ENCODE measurements at regions of chr12 and their contacts with region 1.

Region 1: GRCh38 chr12:118979763-118980406 is 1.5 kb upstream of the SRRM4 start:
- DNase-seq: peak; percentile 22 to 58 (median 37)
- ATAC-seq: peak in 3 of 4 donors; percentile 80 to 82 (median 82)
- H3K4me3 ChIP-seq: no peak overlapping the region
- H3K27ac ChIP-seq: no peak overlapping the region
- H3K4me1 ChIP-seq: no peaks in the 10 kb centered on the region
- H3K27me3 ChIP-seq: peaks cover 0 to 20% (median 7%) of the 10 kb centered on the region in 4 donors
- CTCF ChIP-seq: peak in 3 of 4 donors; percentile 48 to 62 (median 57)

Region 2: DNA sequence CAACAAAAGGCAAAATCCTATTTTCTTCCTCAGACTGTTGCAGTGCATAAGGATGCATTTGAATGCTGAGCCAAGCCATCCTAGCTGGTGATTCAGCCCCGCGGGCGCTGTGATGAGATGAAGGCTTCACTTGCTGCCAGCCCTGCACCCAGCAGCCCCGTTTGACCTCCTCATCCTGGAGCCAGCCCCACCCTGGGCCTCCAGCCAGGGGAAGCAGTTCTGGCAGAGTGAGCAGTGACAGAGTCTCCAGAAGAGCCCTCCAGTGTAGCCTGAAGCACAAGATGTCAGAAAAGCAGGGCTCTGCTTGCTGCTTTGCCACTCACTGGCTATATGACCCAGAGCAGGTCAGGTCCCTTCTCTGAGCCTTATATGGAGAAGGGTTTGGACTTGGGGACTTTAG is 102.6 kb after region 1 on chr12:
- intact Hi-C with region 1: no loop called
- DNase-seq: no peak
- ATAC-seq: no peak
- H3K4me3 ChIP-seq: no peak overlapping the region
- H3K27ac ChIP-seq: no peak overlapping the region
- H3K4me1 ChIP-seq: no peaks in the 10 kb centered on the region
- H3K27me3 ChIP-seq: no peaks in the 10 kb centered on the region
- CTCF ChIP-seq: no peak

Region 3: GRCh38 chr12:119544765-119545625 is 565.1 kb after region 1 on chr12:
- intact Hi-C with region 1: loop called in 1 of 3 experiments (anchors 10 kb)
- DNase-seq: peak in 5 of 6 donors; percentile 41 to 71 (median 51)
- ATAC-seq: peak in 3 of 4 donors; percentile 82 to 86 (median 84)
- H3K4me3 ChIP-seq: no peak overlapping the region
- H3K27ac ChIP-seq: no peak overlapping the region
- H3K4me1 ChIP-seq: no peaks in the 10 kb centered on the region
- H3K27me3 ChIP-seq: no peaks in the 10 kb centered on the region
- CTCF ChIP-seq: peak; percentile 78 to 90 (median 84)